ENCODE measurements at regions of chr1 and their contacts with region 1.

Region 1: GRCh38 chr1:209565759-209566678 is 17.5 kb upstream of the CAMK1G start:
- DNase-seq: peak; percentile 38
- H3K4me3 ChIP-seq: no peak overlapping the region
- CTCF ChIP-seq: peak; percentile 80

Region 2: DNA sequence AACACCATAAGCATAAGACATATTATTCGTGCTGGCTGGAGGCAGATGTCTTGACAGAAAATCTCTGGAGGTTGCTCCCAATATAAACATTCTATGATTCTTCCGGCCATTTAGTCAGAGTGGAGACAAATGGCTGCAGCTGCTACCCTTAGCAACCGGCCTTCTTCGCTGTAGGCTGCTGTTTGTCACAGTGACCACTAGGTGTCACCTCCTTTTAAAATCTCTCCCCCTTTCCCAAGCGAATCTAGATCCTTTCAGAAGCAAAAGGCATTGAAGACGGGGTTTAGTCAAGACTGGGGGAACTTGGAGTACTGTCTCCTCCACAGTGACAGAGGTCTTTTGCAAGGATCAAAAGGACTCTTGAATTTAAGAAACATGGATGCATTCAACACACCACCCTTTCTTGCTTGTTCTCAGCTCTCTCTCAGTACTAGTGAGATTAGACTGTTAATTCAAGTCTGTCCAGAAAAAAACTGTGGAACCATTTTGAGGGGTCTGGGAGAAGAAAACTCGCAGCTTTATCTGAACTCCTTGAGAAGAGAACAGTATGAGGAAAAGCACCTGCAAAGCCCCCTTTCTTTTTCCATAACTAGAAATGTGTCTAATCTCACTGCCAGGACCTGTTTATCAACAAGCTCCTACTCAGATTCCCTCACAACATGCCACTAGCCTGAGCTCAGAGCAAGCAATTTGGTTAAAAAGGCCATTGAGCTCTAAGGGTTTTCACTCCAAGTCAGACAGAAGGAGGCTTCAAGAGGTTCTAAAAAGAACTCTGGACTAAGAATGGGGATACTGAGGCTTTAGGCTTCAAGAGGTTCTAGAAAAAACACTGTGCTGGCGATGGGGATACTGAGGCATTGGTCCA is 913.5 kb before region 1 on chr1:
- CTCF ChIA-PET with region 1: interaction called, 15 read pairs
- POLR2A ChIA-PET with region 1: no interaction called
- DNase-seq: peak; percentile 28
- H3K4me3 ChIP-seq: no peak overlapping the region
- CTCF ChIP-seq: peak; percentile 78

Region 3: DNA sequence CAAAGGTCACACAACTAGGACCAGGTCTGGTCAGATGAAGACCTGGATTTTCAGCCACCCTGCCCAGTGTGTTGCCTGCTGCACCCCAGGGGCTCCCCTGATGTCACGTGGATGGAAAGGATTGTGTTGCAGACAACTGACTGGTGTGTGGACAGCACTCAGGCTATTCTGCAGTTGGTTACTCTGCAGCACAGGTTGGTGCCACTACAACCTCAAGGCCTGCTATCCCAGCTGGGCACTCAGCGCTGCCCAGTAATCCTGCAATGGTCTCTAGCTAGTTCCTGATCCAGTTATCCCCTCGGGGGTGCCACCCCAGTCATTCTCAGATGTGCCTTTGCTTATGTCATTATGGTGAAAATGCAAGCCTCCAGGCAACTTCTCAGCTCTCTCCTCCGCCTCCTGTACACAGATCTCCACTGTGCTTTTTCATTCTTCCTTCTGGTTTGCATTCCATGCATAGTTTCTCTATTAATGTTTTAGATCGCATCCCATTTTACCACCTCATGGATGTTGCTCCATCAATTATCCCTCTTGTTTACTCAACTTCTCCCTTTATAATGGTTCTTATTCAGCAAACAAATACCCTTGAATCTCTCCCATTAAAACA is 485.7 kb before region 1 on chr1:
- CTCF ChIA-PET with region 1: no interaction called
- POLR2A ChIA-PET with region 1: no interaction called
- DNase-seq: no peak
- H3K4me3 ChIP-seq: no peak overlapping the region
- CTCF ChIP-seq: no peak

Region 4: GRCh38 chr1:209527993-209528392 is 38.0 kb before region 1 on chr1:
- CTCF ChIA-PET with region 1: interaction called, 13 read pairs
- POLR2A ChIA-PET with region 1: no interaction called
- DNase-seq: no peak
- H3K4me3 ChIP-seq: no peak overlapping the region
- CTCF ChIP-seq: no peak

Region 5: DNA sequence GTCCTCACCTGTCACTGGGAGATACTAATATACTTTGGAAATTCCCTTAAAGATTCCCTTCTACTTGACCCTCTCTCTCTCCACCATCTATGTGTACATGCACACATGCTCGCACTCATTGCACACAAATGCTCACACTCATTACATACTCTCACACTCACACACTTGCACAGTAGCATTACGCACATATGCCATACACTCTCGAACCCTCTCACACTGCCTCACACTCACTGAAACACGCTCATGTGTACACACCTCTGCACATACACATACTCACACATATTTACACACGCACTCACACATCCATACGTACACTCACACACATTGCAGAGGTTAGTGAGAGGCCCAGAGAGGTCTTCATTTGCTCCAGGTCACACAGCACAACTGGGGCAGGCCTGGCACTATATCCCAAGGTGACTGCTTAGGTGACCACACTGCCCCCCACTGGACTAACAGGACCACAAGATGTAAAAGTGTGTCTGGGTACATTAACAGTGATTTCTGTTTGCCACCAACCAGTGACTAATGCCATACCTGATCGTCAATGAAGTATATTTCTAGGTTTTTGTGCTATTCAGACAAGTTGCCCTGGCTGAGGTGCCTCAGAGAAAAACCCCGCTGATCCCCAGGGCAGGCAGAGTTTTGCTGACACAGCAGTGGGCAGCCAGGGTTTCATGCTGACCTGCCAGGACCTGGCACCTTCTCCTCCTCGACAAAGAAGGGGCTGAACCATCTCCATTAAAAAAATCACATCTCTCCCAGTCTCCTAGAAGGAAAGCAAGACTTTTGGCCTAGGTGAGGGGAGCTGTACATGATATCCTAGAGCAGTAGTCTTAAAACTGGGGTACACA is 11.0 kb before region 1 on chr1:
- CTCF ChIA-PET with region 1: interaction called, 14 read pairs
- POLR2A ChIA-PET with region 1: no interaction called
- DNase-seq: no peak
- H3K4me3 ChIP-seq: no peak overlapping the region
- CTCF ChIP-seq: no peak

Region 6: DNA sequence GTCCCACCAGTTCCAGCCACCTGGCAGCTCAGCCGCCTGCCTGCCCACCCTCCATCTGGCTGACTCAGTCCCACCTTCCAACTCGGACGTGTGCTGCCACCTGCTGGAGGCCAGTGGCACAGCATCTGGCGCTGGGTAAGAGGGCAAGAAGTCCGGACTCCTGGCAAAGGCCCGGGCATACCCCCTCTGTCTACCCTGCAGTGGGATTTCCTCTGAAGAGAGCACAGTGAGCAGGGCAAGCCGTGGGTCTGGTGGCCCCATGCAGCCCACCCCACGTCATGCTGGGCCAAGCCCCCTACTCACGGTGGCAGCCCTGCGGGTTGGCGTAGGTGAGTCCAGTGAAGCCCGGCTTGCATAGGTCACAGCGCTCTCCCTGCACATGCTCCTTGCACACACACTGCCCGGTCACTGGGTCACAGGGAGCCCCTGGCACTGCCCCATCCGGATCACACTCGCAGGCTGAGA is 61.7 kb after region 1 on chr1:
- CTCF ChIA-PET with region 1: interaction called, 93 read pairs
- POLR2A ChIA-PET with region 1: interaction called, 3 read pairs
- DNase-seq: no peak
- H3K4me3 ChIP-seq: no peak overlapping the region
- CTCF ChIP-seq: peak; percentile 97

Region 7: DNA sequence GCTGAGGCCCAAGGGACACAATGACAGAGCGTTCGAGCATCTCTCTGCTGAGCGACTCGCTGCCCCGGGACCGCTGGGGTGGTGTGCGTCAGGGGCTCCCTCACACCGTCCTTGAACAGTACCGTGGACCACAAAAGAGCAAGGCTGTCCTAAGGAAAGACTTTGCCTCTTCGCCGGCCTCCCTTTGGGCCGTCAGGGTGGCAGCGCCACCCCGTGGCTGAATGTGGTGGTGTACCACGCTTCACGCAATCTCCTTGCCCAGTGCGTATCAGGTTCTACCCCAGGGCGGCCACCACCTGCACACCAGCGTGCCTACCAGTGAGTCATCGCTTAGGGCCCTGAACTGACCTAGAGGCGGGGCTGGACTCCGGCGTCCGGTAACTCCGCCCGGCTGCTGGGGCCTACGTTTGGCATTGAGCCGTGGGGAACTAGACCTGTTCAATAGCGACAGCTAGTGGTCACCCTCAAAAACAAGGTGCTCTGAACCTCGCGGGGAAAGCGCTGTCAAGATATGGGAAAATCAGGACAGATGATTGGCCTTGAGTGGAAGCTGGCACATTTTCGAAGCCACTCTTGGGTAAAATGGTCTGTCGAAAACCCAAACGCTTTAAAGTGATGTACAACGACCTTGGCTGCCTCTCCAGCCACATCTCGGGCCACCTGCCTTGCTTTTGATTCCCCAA is 181.7 kb after region 1 on chr1:
- CTCF ChIA-PET with region 1: interaction called, 47 read pairs
- POLR2A ChIA-PET with region 1: no interaction called
- DNase-seq: no peak
- H3K4me3 ChIP-seq: peak overlapping the region; percentile 45
- CTCF ChIP-seq: peak; percentile 79

Region 8: DNA sequence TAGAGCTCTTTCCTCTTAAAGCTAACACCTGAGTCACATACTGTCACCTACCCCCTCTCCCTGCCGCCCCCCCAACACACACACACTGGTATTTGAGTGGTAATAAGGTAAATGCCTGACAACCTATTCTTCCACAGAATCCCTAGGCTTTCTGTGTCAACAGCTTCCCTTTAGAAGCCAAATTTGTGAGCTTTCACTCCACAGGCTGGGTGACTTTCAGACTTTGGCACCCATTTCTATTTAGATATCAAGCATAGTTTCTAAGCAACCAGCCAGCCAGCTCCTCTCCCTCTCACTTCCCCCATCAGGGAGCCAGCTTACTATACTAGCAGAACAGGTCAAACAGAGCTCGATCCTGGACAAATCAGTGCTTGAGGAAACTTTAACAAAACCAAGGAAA is 221.5 kb after region 1 on chr1:
- CTCF ChIA-PET with region 1: no interaction called
- POLR2A ChIA-PET with region 1: no interaction called
- DNase-seq: no peak
- H3K4me3 ChIP-seq: no peak overlapping the region
- CTCF ChIP-seq: no peak